ENCODE measurements at regions of chr6 and their contacts with region 1.

Region 1: DNA sequence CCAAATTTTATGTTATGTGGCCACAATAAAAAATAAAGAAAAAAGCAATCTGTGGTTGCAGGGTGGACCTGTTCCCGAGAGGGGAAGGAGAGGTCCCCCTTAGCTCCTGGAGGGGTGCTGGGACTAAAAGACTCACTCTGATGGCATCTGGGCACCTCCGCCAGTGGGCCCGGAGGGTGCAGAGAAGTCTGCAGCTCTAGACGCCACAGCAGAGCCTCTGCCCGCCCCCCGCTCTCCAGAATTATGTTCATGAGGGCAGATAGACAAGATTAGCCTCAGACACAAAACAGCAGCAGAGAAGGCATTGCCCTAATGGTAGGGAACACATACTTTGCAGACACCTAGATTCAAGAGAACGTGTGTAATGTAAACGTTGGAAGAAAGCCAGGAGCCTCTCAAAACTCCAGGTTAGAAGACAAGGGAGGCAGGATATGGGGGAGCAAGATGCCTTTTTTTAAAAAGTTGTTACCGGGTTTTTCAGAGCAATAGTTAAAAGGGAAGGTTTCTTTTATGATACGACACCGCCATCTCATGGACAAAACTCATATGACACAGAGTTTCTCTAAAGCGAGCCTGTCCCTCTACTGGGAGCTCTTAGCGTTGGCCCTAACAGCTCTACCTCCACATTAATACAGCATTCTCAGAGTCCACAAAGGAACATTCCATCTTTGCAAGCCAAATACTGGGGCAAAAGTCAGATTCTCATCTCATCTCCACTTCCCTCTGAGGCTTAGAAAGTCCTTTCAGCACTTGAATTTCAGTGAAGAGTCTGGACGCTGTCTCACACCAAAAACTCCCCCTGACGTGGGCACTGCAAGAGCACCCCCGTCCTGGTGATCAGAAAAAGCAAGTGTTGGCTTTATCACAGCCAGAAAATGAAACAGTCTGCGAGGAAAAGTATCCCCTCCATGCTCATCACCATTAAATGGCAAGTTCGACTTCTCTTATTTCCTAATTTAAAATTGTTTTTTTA is 47.2 kb downstream of the FOXF2 start:
- DNase-seq: peak; percentile 62
- H3K4me3 ChIP-seq: no peak overlapping the region
- H3K27ac ChIP-seq: no peak overlapping the region
- H3K4me1 ChIP-seq: peaks cover 6% of the 10 kb centered on the region
- H3K27me3 ChIP-seq: no peaks in the 10 kb centered on the region
- CTCF ChIP-seq: peak; percentile 72

Region 2: DNA sequence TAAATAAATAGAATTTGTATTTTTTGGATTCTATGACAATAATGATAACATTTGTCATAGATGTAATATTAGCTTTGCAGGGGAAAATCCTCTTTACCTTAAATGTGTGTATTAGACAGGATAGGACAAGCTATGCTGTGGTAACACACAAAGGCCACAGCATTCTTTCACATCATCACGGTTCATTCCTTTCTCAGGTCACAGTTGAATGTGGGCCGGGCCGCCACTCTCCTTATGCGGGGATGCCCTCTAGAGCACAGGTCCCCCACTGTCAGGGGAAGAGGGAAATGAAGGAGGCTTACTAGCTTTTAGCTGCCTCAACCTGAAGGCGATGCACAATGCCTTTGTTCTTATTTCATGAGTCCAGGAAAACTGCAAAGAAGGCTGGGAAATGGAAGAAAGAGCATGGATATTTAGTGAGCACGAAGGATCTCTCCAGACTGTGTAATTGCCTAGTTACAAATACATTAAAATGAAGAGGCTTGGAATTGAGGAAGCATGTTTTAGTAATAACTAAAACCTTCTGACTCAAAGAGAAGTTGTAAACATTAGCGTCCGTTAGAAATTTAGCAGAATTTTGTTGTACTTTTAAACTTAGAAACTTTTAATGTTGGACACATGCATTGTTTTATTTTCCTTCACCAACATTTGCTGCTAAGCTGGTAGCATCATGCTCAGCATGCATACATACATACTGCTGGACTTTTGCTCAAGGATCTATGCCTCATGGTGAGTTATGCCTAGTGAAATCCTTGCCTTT is 373.7 kb before region 1 on chr6:
- CTCF ChIA-PET with region 1: no interaction called
- dilution Hi-C with region 1: no loop called
- in situ Hi-C with region 1: no loop called
- intact Hi-C with region 1: no loop called
- DNase-seq: no peak
- H3K4me3 ChIP-seq: no peak overlapping the region
- H3K27ac ChIP-seq: no peak overlapping the region
- H3K4me1 ChIP-seq: no peaks in the 10 kb centered on the region
- H3K27me3 ChIP-seq: no peaks in the 10 kb centered on the region
- CTCF ChIP-seq: no peak

Region 3: DNA sequence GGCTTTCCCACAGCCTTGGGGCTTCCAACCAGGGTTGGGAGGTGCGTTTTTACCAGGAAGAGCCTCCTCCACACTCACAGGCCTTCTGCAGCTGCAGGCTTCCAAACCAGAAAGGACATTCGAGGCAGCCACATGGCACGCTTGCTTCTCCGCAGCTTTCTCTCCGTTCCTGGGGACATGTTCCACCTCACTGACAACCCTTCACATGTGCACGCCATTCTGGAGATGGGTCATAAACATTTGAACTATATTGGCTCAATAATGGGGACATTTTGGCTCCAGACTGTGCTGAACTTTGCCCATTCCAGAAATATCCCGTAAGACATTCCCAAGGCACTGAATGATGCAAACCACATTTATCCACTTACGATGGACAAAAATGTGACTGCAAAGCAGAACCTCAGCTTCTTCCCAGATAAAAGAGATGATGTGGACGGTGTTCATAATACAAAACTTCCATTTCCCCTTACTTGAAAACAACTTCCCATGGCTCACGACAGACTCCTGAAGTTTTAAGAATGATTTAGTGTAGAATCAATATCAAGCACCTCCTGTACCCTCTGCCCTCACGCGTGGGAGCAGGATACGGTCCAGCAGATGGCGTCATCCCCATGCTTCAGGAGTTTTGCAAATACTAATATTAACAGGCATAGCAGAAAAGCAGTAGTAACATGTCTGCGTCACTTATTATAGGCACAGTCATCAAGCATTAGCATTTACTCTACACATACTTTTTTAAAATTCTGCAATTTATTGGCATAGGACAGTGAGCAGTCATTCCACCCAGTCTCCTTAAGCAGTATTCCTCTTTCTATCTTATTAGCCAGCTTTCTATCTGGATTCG is 72.7 kb before region 1 on chr6:
- CTCF ChIA-PET with region 1: no interaction called
- dilution Hi-C with region 1: no loop called
- in situ Hi-C with region 1: no loop called
- intact Hi-C with region 1: loop called (anchors 1 kb)
- DNase-seq: no peak
- H3K4me3 ChIP-seq: no peak overlapping the region
- H3K27ac ChIP-seq: no peak overlapping the region
- H3K4me1 ChIP-seq: no peaks in the 10 kb centered on the region
- H3K27me3 ChIP-seq: no peaks in the 10 kb centered on the region
- CTCF ChIP-seq: peak; percentile 39 to 53

Region 4: DNA sequence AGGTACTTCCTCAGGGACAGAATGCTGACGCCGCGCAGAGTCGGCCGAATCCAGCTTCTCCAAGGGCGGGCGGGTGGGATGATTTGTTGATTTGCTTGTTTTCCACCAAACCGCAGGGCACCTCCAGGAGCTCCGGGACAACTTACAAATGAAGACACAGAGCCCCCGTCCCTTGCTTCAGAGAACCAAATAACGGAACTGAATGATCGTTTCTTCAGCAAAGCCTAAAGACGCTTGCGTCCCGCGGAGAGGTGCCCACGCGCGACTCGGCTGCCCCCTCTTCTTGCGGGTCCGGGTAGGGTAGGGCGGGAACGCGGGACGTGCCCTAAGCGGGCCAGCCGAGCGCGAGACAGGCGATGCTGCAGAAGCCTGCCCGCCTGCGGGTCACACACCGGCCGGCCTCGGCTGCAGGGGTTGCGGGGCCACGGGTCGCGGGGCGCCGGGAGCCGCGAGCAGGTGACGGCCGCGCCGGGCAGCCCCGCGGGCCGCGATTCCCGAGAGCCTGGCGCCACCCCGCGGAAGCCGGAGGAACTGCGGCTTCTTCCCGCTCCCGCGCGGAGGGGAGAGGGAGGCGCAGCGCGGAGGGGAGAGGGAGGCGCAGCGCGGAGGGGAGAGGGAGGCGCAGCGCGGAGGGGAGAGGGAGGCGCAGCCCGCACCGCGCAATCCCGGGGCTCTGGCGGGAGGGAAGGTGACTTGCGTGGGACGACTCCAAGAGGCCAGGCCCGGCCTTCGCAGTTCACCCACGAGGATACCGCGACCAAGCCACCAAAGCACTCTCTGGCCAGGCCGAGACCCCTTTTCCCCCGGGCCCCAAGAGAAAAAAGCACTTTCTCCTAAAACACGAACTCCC is 54.9 kb before region 1 on chr6:
- CTCF ChIA-PET with region 1: interaction called, 7 read pairs
- dilution Hi-C with region 1: no loop called
- in situ Hi-C with region 1: no loop called
- intact Hi-C with region 1: loop called (anchors 5 kb)
- DNase-seq: no peak
- H3K4me3 ChIP-seq: peak overlapping the region in 2 of 3 experiments; percentile 24 to 29
- H3K27ac ChIP-seq: no peak overlapping the region
- H3K4me1 ChIP-seq: peaks cover 13% of the 10 kb centered on the region
- H3K27me3 ChIP-seq: peaks cover 81% of the 10 kb centered on the region
- CTCF ChIP-seq: peak; percentile 57 to 59

Region 5: DNA sequence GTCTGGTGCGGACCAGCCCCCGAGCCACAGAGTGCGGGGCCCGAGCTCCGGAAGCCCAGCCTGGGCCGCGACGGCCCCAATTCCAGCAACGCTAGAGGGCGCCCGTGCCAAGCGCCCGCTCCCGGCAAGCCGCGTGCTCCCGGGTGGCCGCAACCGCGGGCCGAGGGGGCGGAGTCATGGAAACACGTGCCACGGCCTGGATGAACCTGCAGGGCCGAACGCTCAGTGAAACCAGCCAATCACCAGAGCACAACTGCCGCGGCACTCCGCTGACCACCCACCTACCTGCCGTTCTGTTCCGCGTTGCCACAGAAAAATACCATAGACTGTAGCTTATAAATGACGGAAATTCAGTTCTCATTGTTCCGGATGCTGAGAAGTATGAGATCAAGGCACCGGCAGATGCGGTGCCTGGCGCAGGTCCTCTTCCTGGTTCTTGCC is 87.4 kb after region 1 on chr6:
- CTCF ChIA-PET with region 1: no interaction called
- dilution Hi-C with region 1: no loop called
- in situ Hi-C with region 1: no loop called
- intact Hi-C with region 1: no loop called
- DNase-seq: peak; percentile 64
- H3K4me3 ChIP-seq: no peak overlapping the region
- H3K27ac ChIP-seq: no peak overlapping the region
- H3K4me1 ChIP-seq: peaks cover 12% of the 10 kb centered on the region
- H3K27me3 ChIP-seq: no peaks in the 10 kb centered on the region
- CTCF ChIP-seq: peak; percentile 34 to 67